Activated CD4-positive, alpha-beta memory T cell treated with anti-CD3 and anti-CD28 coated beads for 36 hours (primary cell): ENCODE measurements at regions of chr14 and their contacts with region 1.

Region 1: GRCh38 chr14:35404449-35405303 is at the start of gene NFKBIA:
- DNase-seq: peak; percentile 96
- H3K4me3 Mint-ChIP-seq: peak within 1 kb of the TSS; percentile 98
- H3K27ac Mint-ChIP-seq: peak within 1 kb of the TSS; percentile 99
- H3K4me1 Mint-ChIP-seq: peaks cover 42% of the 10 kb centered on the region
- H3K27me3 Mint-ChIP-seq: no peaks in the 10 kb centered on the region
- total RNA-seq, gene NFKBIA: 390 to 393 TPM

Region 2: DNA sequence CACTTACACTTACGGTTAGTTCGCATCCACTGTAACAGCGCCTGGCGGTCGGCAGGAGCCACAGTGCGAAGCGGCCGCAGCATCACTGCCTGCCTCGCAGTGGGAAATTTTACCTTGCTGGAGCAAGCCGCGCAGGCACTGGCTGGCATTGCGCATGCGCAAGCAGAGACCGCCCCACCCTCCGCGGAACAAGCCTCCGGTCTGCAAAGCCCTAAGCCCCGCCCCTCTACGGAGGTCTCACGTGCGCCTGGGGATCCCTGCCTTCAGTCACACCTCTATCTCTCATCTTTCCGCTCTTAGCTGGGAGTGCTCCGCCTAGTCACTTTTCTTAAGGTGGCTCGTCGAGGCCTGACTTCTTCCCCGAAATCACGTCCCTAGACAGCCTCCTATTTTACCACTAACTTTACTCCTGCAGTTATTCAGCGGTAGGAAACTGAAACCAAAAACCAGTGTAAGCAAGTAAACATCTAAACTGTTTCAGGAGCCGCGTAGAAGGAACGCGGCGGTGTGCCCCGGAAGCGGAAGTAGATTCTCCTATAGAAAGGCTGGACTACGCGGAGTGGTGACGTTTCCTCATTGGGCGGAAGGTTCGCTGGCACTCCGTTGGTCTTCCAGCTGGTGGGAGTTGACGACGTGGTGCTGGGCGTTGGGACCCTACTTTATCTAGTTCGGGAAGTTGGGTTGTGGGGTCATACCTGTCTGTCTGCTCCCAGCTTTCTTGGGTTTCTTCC is 422.1 kb before region 1 on chr14 and contains the start of gene SRP54:
- CTCF ChIA-PET with region 1: interaction called, 4 read pairs
- POLR2A ChIA-PET with region 1: interaction called, 5 read pairs
- intact Hi-C with region 1: loop called (anchors 1 kb)
- DNase-seq: peak; percentile 100
- H3K4me3 Mint-ChIP-seq: no peak within 1 kb of the TSS
- H3K27ac Mint-ChIP-seq: no peak within 1 kb of the TSS
- H3K4me1 Mint-ChIP-seq: peaks cover 23% of the 10 kb centered on the region
- H3K27me3 Mint-ChIP-seq: no peaks in the 10 kb centered on the region
- total RNA-seq, gene SRP54: 82.6 to 87.7 TPM

Region 3: DNA sequence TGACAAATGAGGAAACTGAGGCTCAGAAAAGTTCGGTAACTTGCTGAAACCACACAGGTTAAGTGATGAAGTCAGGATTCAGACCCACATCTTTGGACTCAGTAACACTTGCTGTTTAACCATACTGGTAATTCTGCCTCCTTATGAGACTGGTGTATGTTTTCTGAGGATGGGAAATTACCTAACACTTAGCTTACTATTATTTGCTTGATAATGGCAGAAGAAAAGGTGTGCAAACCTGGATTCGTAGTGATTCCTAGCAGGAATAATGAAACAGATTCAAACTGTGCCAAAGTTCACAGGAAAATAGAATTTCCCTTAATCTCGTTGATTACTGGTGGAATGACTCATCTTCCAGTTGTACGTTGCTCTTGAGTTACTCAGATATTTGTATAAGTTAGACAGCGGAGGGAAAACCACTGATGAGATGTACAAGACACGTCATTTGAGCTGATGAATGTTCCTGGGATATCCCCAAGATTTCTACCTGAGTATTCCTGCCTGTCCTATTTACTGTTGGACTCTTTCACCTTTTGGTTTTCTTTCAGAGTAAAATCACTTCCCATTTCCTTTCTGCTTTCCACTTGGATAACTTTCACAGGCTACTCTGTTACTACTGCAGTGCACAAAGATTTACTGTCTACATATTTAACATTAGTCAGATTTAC is 244.8 kb before region 1 on chr14:
- CTCF ChIA-PET with region 1: interaction called, 3 read pairs
- POLR2A ChIA-PET with region 1: interaction called, 11 read pairs
- intact Hi-C with region 1: no loop called
- DNase-seq: no peak
- H3K4me3 Mint-ChIP-seq: peak overlapping the region; percentile 16
- H3K27ac Mint-ChIP-seq: peak overlapping the region; percentile 79
- H3K4me1 Mint-ChIP-seq: peaks cover 57% of the 10 kb centered on the region
- H3K27me3 Mint-ChIP-seq: no peaks in the 10 kb centered on the region

Region 4: GRCh38 chr14:35285168-35286002 is 119.3 kb before region 1 on chr14:
- CTCF ChIA-PET with region 1: interaction called, 33 read pairs
- POLR2A ChIA-PET with region 1: interaction called, 150 read pairs
- intact Hi-C with region 1: loop called (anchors 1 kb)
- DNase-seq: peak; percentile 35
- H3K4me3 Mint-ChIP-seq: peak overlapping the region; percentile 48
- H3K27ac Mint-ChIP-seq: peak overlapping the region; percentile 96
- H3K4me1 Mint-ChIP-seq: peaks cover 50% of the 10 kb centered on the region
- H3K27me3 Mint-ChIP-seq: no peaks in the 10 kb centered on the region

Region 5: DNA sequence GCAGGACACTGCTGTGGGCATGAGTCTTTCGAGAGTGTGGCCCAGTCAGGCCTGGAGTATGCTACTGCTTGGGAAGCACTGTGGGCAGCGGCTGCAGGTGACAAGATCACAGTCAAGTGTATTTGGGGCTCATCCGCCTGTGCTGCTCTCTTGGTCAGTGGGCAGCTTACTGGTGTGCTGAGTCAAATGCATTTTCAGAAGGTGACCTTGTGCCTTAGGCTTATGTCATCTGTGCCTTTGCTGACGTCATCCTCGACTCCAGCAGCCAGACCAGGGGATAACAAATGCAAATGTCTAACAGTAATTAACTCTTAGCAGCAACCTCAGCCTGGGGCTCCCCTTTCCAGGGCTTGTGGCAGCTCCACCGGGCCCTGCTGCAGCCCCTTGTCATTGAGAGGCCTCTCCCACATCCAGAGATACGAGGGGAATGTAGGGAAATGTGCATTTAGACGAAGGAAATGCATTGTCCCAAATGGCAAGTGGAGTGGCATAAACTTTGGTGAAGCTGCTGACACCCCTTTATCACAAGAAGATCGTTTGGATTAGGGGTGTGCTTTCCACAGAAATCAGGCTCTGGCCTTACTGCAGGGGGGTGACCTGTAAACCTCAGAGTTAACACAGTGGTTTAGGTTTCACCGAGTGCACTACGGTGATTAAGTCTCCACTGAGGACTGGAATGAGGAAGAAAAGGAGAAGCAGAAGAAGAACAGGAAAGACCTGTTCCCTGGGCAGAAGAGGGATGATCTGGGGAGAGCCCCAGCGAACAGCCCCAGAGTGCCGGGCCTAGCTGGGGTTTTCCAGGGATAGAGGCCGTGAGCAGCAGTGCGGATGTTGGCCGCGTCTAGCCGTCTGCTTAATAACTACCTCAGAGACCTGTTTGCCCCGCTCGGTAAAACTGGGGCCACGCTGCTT is 72.8 kb before region 1 on chr14:
- CTCF ChIA-PET with region 1: interaction called, 6 read pairs
- POLR2A ChIA-PET with region 1: interaction called, 75 read pairs
- intact Hi-C with region 1: loop called (anchors 1 kb)
- DNase-seq: no peak
- H3K4me3 Mint-ChIP-seq: no peak overlapping the region
- H3K27ac Mint-ChIP-seq: peak overlapping the region; percentile 95
- H3K4me1 Mint-ChIP-seq: peaks cover 30% of the 10 kb centered on the region
- H3K27me3 Mint-ChIP-seq: no peaks in the 10 kb centered on the region

Region 6: DNA sequence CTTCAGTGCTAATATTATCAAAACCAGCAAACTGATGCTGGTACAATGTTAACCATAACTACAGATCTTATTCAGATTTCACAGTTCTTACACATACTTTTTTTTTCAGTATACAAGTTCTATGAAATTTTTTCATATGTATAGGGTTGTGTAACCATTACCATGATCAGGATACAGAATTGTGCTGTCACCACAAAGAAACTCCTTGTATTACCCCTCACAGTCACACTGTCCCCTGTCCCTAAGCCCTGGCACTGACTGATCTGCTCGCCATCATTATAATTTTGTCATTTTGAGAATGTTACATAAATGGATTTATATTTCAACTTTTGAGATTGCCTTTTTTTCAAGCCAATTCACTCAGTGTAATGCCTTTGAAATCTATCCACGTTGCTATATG is 21.2 kb after region 1 on chr14:
- CTCF ChIA-PET with region 1: interaction called, 6 read pairs
- POLR2A ChIA-PET with region 1: no interaction called
- intact Hi-C with region 1: loop called (anchors 2 kb)
- DNase-seq: no peak
- H3K4me3 Mint-ChIP-seq: no peak overlapping the region
- H3K27ac Mint-ChIP-seq: no peak overlapping the region
- H3K4me1 Mint-ChIP-seq: peaks cover 24% of the 10 kb centered on the region
- H3K27me3 Mint-ChIP-seq: no peaks in the 10 kb centered on the region